CD8-positive, alpha-beta T cell (primary cell): ENCODE measurements at regions of chr4 and their contacts with region 1.

Region 1: GRCh38 chr4:52545099-52546069 is 113.7 kb downstream of the USP46 start:
- DNase-seq: peak; percentile 23 to 64 (median 55)
- ATAC-seq: peak; percentile 38
- H3K4me3 ChIP-seq: no peak overlapping the region
- H3K4me3 Mint-ChIP-seq: no peak overlapping the region
- H3K27ac ChIP-seq: no peak overlapping the region
- H3K27ac Mint-ChIP-seq: no peak overlapping the region
- H3K4me1 ChIP-seq: no peaks in the 10 kb centered on the region
- H3K4me1 Mint-ChIP-seq: no peaks in the 10 kb centered on the region
- H3K27me3 ChIP-seq: peaks cover 0 to 3% of the 10 kb centered on the region in 2 experiments
- H3K27me3 Mint-ChIP-seq: peaks cover 16% of the 10 kb centered on the region
- CTCF ChIP-seq: peak; percentile 62

Region 2: GRCh38 chr4:52665592-52665991 is 120.2 kb after region 1 on chr4:
- CTCF ChIA-PET with region 1: interaction called, 8 read pairs
- POLR2A ChIA-PET with region 1: no interaction called
- intact Hi-C with region 1: loop called in 1 of 2 experiments (anchors 5 kb)
- DNase-seq: peak in 2 of 9 experiments; percentile 36 to 50
- ATAC-seq: peak; percentile 34
- H3K4me3 ChIP-seq: no peak overlapping the region
- H3K4me3 Mint-ChIP-seq: no peak overlapping the region
- H3K27ac ChIP-seq: no peak overlapping the region
- H3K27ac Mint-ChIP-seq: no peak overlapping the region
- H3K4me1 ChIP-seq: no peaks in the 10 kb centered on the region
- H3K4me1 Mint-ChIP-seq: peaks cover 2% of the 10 kb centered on the region
- H3K27me3 ChIP-seq: no peaks in the 10 kb centered on the region
- H3K27me3 Mint-ChIP-seq: peaks cover 38% of the 10 kb centered on the region
- CTCF ChIP-seq: no peak

Region 3: DNA sequence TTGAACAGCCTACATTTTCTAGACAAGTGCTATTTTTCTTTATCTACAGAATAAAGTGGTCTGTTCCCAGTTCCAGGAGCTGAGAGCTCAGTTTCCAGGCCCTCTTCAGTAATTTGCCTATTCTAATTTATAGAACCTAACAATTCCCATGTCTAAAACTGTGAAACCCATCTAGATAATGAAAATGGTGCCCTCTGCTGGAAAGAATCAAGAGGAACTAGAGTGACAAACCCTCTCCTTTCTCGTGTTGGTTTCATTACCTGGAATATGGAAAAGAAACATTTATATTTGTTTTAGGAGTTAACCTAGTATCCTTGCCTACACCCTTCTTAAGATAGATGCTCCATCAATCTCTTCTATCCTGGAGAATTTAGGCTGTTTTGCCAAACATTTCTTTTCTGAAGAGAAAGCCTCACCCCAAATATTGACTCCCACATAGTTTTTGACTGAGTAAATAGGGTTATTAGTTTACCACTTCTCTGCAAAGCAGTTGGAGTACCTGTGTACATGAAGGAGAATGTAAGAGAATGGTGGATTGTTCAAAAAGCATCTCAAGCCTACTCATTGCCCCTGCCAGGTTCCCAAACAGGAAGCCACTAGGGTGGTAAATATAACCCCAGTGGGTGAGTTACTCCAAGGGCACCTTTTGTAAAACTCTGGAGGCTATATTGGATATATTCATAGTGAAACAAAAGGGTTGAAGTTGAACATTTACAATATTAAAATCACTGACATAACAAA is 438.3 kb after region 1 on chr4:
- CTCF ChIA-PET with region 1: interaction called, 42 read pairs
- POLR2A ChIA-PET with region 1: no interaction called
- intact Hi-C with region 1: loop called (anchors 2 to 5 kb)
- DNase-seq: peak in 2 of 9 experiments; percentile 47 to 61
- ATAC-seq: no peak
- H3K4me3 ChIP-seq: no peak overlapping the region
- H3K4me3 Mint-ChIP-seq: no peak overlapping the region
- H3K27ac ChIP-seq: no peak overlapping the region
- H3K27ac Mint-ChIP-seq: no peak overlapping the region
- H3K4me1 ChIP-seq: no peaks in the 10 kb centered on the region
- H3K4me1 Mint-ChIP-seq: peaks cover 4% of the 10 kb centered on the region
- H3K27me3 ChIP-seq: no peaks in the 10 kb centered on the region
- H3K27me3 Mint-ChIP-seq: no peaks in the 10 kb centered on the region
- CTCF ChIP-seq: peak; percentile 65